AG04450 (cell line): ENCODE measurements at regions of chr20 and their contacts with region 1.

Region 1: DNA sequence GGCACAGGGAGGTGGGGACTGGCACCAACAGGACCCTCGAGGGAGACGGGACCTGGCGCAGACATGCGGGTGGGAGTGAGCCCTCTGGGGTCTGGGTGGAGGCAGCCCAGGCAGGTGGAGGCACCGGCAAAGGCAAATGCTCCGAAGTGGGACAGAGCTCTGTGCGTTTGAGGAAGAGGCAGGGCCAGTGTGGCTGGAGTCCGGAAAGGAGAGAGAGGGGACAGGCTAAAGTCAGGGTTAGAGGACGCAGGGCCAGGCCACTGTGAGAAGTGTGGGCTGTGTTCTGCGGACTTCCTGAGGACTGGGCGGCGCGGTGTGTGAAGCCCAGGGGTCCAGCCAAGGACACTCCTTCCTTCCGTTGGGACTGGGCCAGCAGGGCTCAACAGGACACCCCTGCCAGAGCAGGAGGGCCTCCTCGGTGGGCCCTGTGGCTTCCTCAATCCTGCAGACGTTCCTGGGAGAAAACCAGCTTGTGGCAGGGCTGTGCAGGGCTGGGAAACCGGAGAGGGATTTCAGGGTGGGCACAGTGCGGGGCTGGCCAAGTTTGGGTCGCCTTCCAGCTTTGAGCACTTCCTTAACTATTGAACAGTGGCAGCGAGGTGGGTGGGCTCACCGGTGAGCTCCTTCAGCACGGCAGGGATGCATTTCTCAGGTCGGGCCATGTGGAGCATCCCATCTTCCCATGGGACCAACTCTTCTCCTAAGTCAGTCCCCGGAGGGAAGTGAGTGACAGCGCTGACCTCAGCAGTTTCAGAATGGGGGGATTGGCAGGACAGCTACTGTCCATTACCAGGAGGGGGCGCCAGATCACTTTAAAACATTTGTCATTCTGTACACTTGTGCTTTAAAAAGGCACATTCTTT is 22.5 kb downstream of the MOCS3 start:
- DNase-seq: no peak
- H3K4me3 ChIP-seq: no peak overlapping the region
- H3K27ac ChIP-seq: peak overlapping the region; percentile 99
- H3K27me3 ChIP-seq: no peaks in the 10 kb centered on the region
- CTCF ChIP-seq: peak; percentile 83

Region 2: DNA sequence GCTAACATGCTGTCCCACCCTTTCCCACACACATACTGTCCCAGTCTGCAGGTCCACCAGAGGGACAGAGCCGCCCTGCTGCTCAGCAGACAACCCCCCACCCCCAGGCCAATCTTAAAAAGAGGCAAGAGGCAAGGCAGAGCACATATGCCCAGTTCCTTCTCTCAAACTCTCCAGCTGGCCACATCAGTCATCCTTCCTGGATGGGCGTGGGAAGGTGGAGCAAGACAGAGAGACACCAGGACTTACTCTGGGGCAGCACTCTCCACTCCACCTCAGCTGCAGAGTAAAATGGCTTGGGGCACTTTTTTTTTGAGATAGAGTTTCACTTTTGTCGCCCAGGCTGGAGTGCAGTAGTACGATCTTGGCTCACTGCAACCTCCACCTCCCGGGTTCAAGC is 11.6 kb before region 1 on chr20:
- CTCF ChIA-PET with region 1: interaction called, 13 read pairs
- POLR2A ChIA-PET with region 1: interaction called, 3 read pairs
- DNase-seq: no peak
- H3K4me3 ChIP-seq: no peak overlapping the region
- H3K27ac ChIP-seq: no peak overlapping the region
- H3K27me3 ChIP-seq: peaks cover 5% of the 10 kb centered on the region
- CTCF ChIP-seq: no peak

Region 3: GRCh38 chr20:50992733-50993457 is 11.8 kb after region 1 on chr20:
- CTCF ChIA-PET with region 1: interaction called, 19 read pairs
- POLR2A ChIA-PET with region 1: no interaction called
- DNase-seq: no peak
- H3K4me3 ChIP-seq: no peak overlapping the region
- H3K27ac ChIP-seq: no peak overlapping the region
- H3K27me3 ChIP-seq: no peaks in the 10 kb centered on the region
- CTCF ChIP-seq: peak; percentile 75

Region 4: GRCh38 chr20:51306503-51307358 is 325.6 kb after region 1 on chr20:
- CTCF ChIA-PET with region 1: interaction called, 57 read pairs
- POLR2A ChIA-PET with region 1: no interaction called
- DNase-seq: peak; percentile 34
- H3K4me3 ChIP-seq: no peak overlapping the region
- H3K27ac ChIP-seq: no peak overlapping the region
- H3K27me3 ChIP-seq: no peaks in the 10 kb centered on the region
- CTCF ChIP-seq: peak; percentile 87